ENCODE measurements at regions of chr10 and their contacts with region 1.

Region 1: DNA sequence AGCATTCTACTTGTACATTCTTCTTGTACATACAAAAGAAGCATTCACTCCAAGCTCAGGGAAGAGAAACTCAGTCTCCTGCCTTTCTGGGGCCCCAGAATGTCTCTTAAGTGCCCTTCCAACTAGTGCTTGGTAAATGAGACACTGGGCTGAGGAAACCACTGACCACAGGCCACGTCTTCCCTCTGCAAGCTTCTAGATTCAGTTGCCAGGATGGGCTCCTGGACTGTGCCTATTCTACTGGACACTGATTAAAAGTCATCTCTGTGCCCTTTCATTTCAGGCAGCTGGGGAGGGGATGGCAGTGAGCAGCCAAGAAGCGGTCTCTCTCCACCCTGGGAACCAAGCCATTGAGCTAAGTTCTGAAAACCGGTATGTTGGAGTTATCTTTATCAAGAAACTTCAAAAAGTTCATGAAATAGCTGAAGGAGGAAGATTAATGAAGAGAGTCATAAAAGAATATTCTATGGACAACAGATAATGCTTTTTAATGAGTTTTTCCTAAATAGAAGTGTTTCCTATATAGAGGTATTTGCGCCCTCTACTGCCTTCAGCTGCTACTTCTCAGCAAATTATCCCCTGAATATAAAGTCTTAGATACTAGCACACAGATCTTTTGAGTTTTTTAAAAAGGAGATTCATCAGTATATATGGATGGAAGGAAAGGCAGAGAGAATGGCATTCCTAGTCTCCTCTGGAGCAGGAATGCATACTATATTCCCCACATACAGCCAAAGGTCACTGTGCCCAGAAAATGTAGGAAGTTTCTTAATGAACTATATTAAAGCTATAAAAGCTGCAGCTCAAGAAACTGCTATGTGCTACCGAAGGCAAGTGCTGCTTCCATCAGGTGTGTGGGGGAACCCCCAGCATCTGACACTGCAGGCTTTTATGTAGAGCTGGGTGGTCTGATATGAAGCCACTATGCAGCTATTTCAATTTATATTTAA is 8.4 kb upstream of the IFIT1B start:
- DNase-seq: peak; percentile 35
- H3K4me3 ChIP-seq: no peak overlapping the region
- H3K27ac ChIP-seq: no peak overlapping the region
- H3K4me1 ChIP-seq: peaks cover 13 to 15% of the 10 kb centered on the region in 2 experiments
- H3K27me3 ChIP-seq: no peaks in the 10 kb centered on the region
- CTCF ChIP-seq: peak; percentile 81
- EP300 ChIP-seq: no peak
- RAD21 ChIP-seq: peak; percentile 73

Region 2: DNA sequence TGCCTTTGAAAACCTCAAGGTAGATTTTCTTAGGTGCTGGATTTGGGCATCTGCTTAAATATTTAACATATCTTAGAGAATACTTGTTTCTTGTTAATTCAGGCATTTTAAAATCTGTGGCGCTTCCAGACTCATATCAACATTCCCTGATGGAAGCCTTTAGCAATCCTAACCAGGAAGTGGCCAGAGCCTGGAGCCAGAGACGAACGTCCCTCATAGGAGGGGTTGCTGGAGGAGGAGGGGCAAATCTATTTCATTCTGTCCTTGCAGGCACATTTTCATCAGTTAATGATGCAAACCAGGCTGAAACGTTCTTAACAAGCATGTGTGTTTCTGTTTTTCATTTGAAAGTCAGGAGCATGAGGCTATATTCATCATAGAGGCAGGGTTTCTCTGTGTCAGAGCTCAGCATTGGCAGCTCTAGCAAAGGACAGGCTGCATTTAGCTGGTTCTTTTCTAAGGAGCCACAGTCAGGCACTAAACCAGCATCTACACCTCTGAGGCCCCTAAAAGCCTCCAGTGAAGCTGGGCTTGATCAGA is 85.4 kb before region 1 on chr10:
- CTCF ChIA-PET with region 1: interaction called, 12 read pairs
- POLR2A ChIA-PET with region 1: interaction called, 3 read pairs
- DNase-seq: peak; percentile 70
- H3K4me3 ChIP-seq: peak overlapping the region; percentile 36 to 57
- H3K27ac ChIP-seq: peak overlapping the region; percentile 97 to 99
- H3K4me1 ChIP-seq: peaks cover 39 to 49% of the 10 kb centered on the region in 2 experiments
- H3K27me3 ChIP-seq: no peaks in the 10 kb centered on the region
- CTCF ChIP-seq: no peak
- EP300 ChIP-seq: peak; percentile 40 to 81; a peak in 3 of 4 replicates
- RAD21 ChIP-seq: peak; percentile 42; the same call in 1 of the 2 replicates

Region 3: DNA sequence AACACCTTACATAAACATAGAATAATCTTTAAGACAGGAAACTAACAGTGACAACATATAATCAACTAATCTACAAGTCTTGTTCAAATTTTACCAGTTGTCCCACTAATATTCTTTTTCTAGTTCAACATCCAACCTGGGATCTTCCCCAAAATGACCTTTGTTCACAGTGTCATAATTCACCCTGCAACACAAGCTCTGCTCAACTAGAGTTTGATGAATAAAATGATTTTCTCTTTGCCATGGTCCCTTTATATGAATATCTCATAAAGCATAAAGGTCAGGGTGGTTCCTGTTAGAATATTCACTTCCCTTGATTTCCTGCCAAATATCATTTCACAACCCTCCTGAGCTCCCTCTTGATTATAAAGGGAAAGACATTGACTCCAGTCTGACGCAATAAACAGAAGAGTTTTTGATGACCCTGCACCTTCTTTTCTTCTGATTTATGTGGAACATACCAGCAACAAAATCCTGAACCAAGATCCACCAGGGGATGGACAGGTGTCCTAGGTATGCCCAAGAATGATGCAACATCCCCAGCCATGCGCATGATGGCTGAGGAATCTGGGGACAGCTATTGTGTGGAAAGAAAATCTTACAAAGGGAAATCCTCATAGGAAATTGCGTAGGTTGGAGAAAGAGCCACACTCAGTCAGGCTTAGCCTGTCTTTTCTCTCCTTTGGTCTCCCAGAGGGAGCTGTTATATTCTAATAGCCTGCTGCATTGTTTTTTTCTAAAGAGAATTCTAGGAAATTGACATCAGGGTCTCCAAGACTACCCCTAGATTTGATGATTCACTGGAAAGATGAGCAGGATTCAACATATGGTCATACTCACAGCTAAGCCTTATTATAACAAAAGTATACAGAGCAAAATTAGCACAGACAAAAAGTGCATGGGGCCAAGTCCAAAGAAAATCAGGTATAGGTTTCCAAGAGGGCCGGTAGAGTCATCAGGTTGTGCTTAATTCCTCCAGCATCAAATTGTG is 22.9 kb before region 1 on chr10:
- CTCF ChIA-PET with region 1: interaction called, 13 read pairs
- POLR2A ChIA-PET with region 1: no interaction called
- DNase-seq: no peak
- H3K4me3 ChIP-seq: no peak overlapping the region
- H3K27ac ChIP-seq: no peak overlapping the region
- H3K4me1 ChIP-seq: peaks cover 2 to 26% of the 10 kb centered on the region in 2 experiments; a peak in 3 of 4 replicates
- H3K27me3 ChIP-seq: no peaks in the 10 kb centered on the region
- CTCF ChIP-seq: no peak
- EP300 ChIP-seq: no peak
- RAD21 ChIP-seq: no peak

Region 4: GRCh38 chr10:89351780-89352597 is 17.4 kb before region 1 on chr10:
- CTCF ChIA-PET with region 1: interaction called, 13 read pairs
- POLR2A ChIA-PET with region 1: no interaction called
- DNase-seq: no peak
- H3K4me3 ChIP-seq: peak overlapping the region in 1 of 2 experiments; percentile 21; a peak in 1 of 4 replicates
- H3K27ac ChIP-seq: peak overlapping the region; percentile 77 to 79
- H3K4me1 ChIP-seq: peaks cover 0 to 37% of the 10 kb centered on the region in 2 experiments; a peak in 3 of 4 replicates
- H3K27me3 ChIP-seq: no peaks in the 10 kb centered on the region
- CTCF ChIP-seq: no peak
- EP300 ChIP-seq: no peak
- RAD21 ChIP-seq: no peak

Region 5: GRCh38 chr10:89389254-89389653 is 19.8 kb after region 1 on chr10:
- CTCF ChIA-PET with region 1: interaction called, 17 read pairs
- POLR2A ChIA-PET with region 1: no interaction called
- DNase-seq: peak; percentile 41
- H3K4me3 ChIP-seq: no peak overlapping the region; a peak in 1 of 4 replicates
- H3K27ac ChIP-seq: no peak overlapping the region
- H3K4me1 ChIP-seq: peaks cover 2 to 13% of the 10 kb centered on the region in 2 experiments; a peak in 2 of 4 replicates
- H3K27me3 ChIP-seq: no peaks in the 10 kb centered on the region
- CTCF ChIP-seq: peak; percentile 64
- EP300 ChIP-seq: no peak
- RAD21 ChIP-seq: peak; percentile 83

Measured in SK-N-SH (cell line).